ENCODE measurements at regions of chr20 and their contacts with region 1.

Region 1: DNA sequence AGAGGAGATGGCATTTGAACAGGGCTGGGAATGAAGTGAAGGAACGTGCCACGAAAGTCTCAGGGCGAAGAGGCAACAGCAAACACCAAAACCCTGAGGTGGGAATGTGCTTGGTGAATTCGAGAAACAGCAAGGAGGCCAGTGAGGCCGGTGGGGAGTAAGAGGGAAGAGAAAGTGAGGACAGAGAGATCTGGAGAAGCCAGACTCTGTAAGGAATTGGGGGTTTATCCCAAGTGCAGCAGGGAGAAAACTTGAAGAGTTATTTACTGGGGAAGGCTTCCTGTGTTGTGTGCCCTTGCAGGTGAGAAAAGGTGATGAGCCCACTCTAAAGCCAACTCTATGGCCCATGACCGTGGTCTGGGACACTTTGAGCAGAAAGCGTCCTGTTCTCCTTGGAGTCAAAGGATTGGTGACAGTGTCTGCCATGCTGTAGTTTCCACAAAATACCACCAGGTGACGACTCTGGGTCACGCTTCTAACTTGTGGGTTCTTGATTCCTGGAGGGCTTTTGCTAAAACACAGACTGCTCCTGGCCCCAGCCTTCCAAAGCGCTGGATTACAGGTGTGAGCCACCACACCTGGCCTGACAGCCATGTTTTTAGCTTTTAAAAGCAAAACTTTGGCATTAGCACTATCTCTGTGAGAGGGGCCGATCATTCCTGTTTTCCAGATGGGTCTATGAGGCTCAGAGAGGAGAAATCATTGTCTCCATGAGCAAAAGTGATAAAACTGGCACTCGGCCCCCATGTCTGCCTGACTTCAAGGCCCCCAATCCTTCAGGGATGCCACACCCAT is 18.0 kb upstream of the CSNK2A1 start:
- DNase-seq: peak; percentile 27 to 55 (median 54)
- H3K4me3 ChIP-seq: no peak overlapping the region
- H3K4me3 Mint-ChIP-seq: no peak overlapping the region
- H3K27ac ChIP-seq: no peak overlapping the region
- H3K27ac Mint-ChIP-seq: no peak overlapping the region
- H3K4me1 ChIP-seq: no peaks in the 10 kb centered on the region
- H3K4me1 Mint-ChIP-seq: no peaks in the 10 kb centered on the region
- H3K27me3 ChIP-seq: no peaks in the 10 kb centered on the region
- H3K27me3 Mint-ChIP-seq: peaks cover 6 to 17% (median 9%) of the 10 kb centered on the region in 3 donors
- CTCF ChIP-seq: peak; percentile 96

Region 2: DNA sequence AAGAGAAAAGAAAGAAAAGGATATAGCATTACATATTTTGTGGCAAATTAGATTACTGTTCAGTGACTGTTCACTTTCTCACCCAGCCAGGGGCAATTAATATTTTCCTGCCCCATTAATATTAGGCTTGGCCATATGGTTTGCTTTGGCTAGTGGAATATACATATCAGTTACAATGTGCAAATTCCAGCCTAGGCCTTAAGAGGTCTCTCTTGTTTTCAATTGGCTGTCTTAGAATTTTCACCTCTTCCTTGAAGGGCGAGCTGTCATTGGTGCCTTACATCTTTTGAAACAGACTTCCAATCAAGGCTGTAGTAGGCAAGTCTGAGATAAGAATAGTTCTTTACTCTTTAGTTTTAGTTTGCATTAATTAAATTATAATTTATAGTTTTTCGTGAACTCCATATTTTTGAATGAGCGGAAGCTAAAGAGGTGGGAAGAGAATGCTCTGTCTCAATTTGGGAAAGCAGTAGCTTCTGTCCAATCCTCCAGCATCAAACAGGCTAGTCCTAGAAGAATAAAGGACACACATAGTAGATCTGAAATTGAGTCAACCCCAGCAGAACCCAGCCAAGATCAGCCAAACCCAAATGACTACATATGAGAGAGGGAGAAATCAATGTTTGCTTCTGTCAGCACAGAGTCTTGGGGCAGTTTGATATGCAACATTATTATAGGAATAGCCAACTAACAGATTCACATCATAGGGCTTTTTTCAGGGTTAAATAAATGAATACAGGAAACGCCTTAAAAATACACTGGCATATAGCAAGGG is 11.7 kb before region 1 on chr20:
- intact Hi-C with region 1: no loop called
- DNase-seq: no peak
- H3K4me3 ChIP-seq: no peak overlapping the region
- H3K4me3 Mint-ChIP-seq: no peak overlapping the region
- H3K27ac ChIP-seq: no peak overlapping the region
- H3K27ac Mint-ChIP-seq: no peak overlapping the region
- H3K4me1 ChIP-seq: no peaks in the 10 kb centered on the region
- H3K4me1 Mint-ChIP-seq: no peaks in the 10 kb centered on the region
- H3K27me3 ChIP-seq: peaks cover 5 to 6% of the 10 kb centered on the region in 2 donors
- H3K27me3 Mint-ChIP-seq: peaks cover 11 to 31% (median 19%) of the 10 kb centered on the region in 3 donors
- CTCF ChIP-seq: no peak

Region 3: DNA sequence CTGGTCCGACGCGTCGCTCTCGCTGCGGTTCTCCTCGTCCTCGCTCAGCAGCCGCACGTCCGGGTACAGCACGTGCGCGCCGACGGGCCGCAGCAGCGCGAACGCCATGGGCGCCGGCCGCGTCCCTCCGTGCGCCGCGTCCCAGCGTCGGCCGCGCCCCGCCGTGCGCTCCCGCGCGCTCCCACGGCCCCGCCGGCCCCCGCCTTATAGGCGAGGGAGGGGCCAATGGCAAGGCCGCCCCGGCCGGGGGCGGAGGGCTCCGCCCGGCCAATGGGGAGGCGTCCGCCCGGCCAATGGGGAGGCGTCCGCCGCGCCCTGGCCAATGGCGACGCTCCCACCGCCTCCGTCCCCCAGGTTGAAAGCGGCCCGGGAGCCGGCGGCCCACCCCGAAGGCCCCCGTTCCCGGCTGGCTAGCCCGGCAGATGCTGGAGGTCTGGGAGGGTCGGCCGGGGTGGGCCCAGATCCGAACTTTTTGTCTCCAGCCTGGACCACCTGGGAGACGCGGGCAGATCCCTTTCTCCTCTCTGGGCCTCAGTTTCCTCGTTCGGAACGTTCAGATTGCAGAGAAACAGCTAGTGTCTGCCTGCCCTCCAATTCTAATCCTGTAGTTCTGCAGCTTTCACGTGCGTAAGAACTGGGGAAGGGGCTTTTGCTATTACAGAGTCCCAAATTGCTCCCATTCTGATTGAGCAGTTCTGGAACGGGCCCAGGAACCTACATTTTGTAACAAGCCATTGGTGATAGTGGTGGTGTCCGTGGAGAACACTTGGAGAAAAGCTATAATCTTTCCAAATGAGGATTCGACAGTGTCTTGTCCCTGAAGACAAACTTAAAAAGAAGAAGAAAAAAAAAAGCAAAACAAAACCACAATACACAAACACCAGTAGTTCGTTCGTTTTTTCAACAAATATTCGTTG is 48.8 kb after region 1 on chr20 and contains the start of gene TCF15:
- intact Hi-C with region 1: no loop called
- DNase-seq: peak in 1 of 3 donors; percentile 11
- H3K4me3 ChIP-seq: no peak within 1 kb of the TSS
- H3K4me3 Mint-ChIP-seq: peak within 1 kb of the TSS in 1 of 2 donors; percentile 80
- H3K27ac ChIP-seq: no peak within 1 kb of the TSS
- H3K27ac Mint-ChIP-seq: peak within 1 kb of the TSS in 1 of 7 donors; percentile 11
- H3K4me1 ChIP-seq: peaks cover 7 to 10% of the 10 kb centered on the region in 2 donors
- H3K4me1 Mint-ChIP-seq: peaks cover 21% of the 10 kb centered on the region
- H3K27me3 ChIP-seq: peaks cover 29 to 49% of the 10 kb centered on the region in 2 donors
- H3K27me3 Mint-ChIP-seq: peaks cover 46 to 59% (median 49%) of the 10 kb centered on the region in 3 donors
- CTCF ChIP-seq: no peak
- polyA plus RNA-seq, gene TCF15: not detected

Region 4: DNA sequence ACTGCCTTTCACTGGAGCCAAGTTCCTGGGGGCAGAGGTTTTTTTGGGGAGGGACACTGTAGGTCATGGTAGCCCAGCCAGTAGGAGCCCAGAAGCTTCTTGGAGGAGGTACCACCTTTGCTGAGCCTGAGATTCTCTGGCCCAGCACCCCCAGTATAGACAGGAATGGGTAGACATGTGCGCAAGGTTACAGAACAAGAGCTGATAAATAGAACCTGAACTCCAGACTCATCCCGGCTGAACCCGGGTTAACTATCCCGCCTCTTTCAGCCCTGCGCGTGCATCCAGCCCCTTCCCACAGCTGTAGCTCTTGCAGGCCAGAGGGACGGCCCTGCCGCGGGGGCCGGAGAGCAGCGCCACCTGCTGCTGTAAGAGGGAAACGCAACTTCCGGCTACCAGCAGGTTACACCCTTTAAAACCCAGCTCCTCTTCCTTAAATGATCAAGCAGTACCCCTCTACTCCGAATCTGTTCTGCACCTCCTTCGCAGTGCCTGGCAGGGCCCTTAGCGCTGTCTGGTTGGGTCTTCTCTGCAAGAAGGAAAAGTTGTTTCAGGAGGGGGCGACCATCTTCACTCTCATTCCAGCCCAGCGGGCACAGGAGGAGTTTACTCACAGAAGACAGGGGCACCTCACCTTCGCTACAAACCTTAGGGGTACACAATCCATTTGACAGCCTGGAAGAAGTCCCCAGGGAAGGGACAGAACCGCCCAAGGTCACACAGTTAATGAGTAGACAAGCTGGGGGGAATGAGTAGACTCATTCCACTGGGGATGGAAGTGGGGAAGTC is 83.9 kb after region 1 on chr20:
- intact Hi-C with region 1: loop called (anchors 5 kb)
- DNase-seq: peak; percentile 68 to 74 (median 72)
- H3K4me3 ChIP-seq: no peak overlapping the region
- H3K4me3 Mint-ChIP-seq: no peak overlapping the region
- H3K27ac ChIP-seq: no peak overlapping the region
- H3K27ac Mint-ChIP-seq: peak overlapping the region in 3 of 7 donors; percentile 45 to 71 (median 60)
- H3K4me1 ChIP-seq: peaks cover 7 to 8% of the 10 kb centered on the region in 2 donors
- H3K4me1 Mint-ChIP-seq: peaks cover 15% of the 10 kb centered on the region
- H3K27me3 ChIP-seq: peaks cover 3 to 15% of the 10 kb centered on the region in 2 donors
- H3K27me3 Mint-ChIP-seq: peaks cover 15 to 27% (median 26%) of the 10 kb centered on the region in 3 donors
- CTCF ChIP-seq: peak; percentile 99

Region 5: GRCh38 chr20:736897-737296 is 175.3 kb after region 1 on chr20:
- intact Hi-C with region 1: loop called (anchors 5 kb)
- DNase-seq: no peak
- H3K4me3 ChIP-seq: no peak overlapping the region
- H3K4me3 Mint-ChIP-seq: no peak overlapping the region
- H3K27ac ChIP-seq: no peak overlapping the region
- H3K27ac Mint-ChIP-seq: no peak overlapping the region
- H3K4me1 ChIP-seq: no peaks in the 10 kb centered on the region
- H3K4me1 Mint-ChIP-seq: no peaks in the 10 kb centered on the region
- H3K27me3 ChIP-seq: no peaks in the 10 kb centered on the region
- H3K27me3 Mint-ChIP-seq: peaks cover 2 to 6% (median 4%) of the 10 kb centered on the region in 3 donors
- CTCF ChIP-seq: no peak